ENCODE measurements at regions of chr22 and their contacts with region 1.

Region 1: DNA sequence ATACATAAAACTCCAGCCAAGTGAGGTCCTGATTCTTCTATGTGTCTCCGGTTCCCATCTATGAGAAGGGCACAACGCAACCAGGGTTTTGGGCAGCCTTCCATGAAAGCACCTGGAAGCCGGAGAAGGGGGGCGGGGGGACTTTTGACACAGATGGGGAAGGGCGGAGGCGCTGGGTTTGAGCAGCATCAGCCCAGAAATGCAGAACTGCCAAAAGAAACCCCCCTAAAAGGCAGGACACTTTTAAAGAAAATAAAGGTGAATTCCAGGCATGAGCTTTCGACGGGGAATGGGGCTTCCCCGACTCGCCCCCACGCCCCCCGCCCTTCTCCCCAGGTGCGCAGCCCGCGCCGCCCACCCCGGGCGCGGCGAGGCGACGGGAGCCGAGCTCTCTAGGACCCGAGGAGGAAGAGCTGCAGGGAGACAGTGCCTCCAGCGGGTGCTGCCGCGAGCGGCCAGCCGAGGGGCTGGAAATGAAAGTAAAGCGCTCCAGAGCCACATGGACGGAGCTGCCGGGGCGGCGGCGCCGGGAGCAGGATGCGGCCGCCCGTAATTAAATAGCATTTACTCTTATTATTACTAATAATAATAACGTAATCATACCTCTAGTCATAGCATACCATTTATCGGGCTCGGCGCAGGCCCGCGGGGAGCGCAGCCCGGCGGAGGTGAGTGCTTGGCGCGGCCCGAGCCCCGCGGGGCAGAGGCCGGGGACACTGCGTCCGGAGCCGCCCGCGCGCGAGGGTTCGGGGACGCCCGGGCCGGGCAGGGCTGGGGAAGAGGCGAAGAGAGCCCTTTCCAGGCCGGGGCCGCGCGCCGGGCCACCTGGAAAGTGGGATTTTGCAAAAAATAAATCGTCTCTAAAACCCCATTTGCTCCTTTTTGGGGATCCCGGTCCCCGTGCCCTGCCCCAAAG is at the start of gene ZC3H7B:
- DNase-seq: peak; percentile 90
- H3K4me3 ChIP-seq: peak within 1 kb of the TSS; percentile 98
- H3K27ac ChIP-seq: peak within 1 kb of the TSS; percentile 97
- H3K4me1 ChIP-seq: peaks cover 19% of the 10 kb centered on the region
- H3K27me3 ChIP-seq: no peaks in the 10 kb centered on the region
- CTCF ChIP-seq: peak; percentile 57
- total RNA-seq, gene ZC3H7B: 83.9 and 90.4 TPM in 2 replicates

Region 2: DNA sequence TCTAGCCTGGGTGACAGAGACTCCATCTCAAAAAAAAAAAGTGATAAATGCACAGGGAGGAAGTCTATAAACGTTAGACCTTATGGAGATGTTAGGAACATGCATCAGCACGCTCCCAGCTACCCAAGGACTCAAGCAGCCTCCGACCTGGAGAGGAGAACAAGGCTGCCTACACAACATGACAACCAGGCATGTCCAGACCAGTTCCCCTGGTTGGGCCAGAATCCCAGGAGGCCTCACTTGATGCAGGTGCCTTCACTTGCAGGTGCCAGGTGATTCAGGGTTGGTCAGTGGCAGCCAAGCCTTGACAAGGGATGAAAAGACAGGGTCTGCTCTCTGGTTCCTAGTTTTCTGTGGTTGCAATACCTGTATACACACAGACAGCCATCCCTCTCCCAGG is 21.3 kb before region 1 on chr22:
- CTCF ChIA-PET with region 1: no interaction called
- POLR2A ChIA-PET with region 1: no interaction called
- intact Hi-C with region 1: no loop called
- DNase-seq: no peak
- H3K4me3 ChIP-seq: no peak overlapping the region
- H3K27ac ChIP-seq: no peak overlapping the region
- H3K4me1 ChIP-seq: peaks cover 6% of the 10 kb centered on the region
- H3K27me3 ChIP-seq: no peaks in the 10 kb centered on the region
- CTCF ChIP-seq: no peak

Region 3: GRCh38 chr22:41382098-41382578 is 80.8 kb after region 1 on chr22:
- CTCF ChIA-PET with region 1: no interaction called
- POLR2A ChIA-PET with region 1: interaction called, 10 read pairs
- intact Hi-C with region 1: no loop called
- DNase-seq: peak; percentile 76
- H3K4me3 ChIP-seq: peak overlapping the region; percentile 77
- H3K27ac ChIP-seq: peak overlapping the region; percentile 91
- H3K4me1 ChIP-seq: peaks cover 22% of the 10 kb centered on the region
- H3K27me3 ChIP-seq: no peaks in the 10 kb centered on the region
- CTCF ChIP-seq: no peak